Esophagus squamous epithelium (tissue), 5 donors: ENCODE measurements at regions of chr17 and their contacts with region 1.

Region 1: DNA sequence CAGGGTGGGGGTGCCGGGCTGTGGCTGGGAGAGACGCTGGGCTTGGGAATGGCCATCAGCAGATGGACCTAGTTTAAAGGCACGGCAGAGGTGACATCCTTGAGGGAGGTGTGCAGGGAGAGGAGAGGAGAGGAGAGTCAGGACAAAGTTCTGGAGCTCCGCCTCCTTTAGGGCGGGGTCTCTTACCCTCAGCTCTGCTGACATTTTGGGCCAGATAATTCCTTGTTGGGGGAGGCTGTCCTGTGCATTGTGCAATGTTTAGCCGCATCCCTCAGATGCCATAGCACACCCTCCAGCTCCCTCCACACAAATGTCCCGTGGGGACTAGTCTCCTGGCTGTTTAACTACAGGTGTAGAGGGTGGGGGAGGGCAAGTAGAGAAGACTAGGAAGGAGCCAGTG is 48.3 kb downstream of the ARHGAP23 start:
- DNase-seq: no peak
- H3K4me3 ChIP-seq: no peak overlapping the region
- H3K27ac ChIP-seq: peak overlapping the region in 2 of 4 donors; percentile 25 to 34
- H3K4me1 ChIP-seq: peaks cover 0 to 42% (median 3%) of the 10 kb centered on the region in 3 donors
- H3K27me3 ChIP-seq: no peaks in the 10 kb centered on the region
- CTCF ChIP-seq: no peak
- POLR2A ChIP-seq: no peak

Region 2: GRCh38 chr17:38403491-38403890 is 73.1 kb before region 1 on chr17:
- intact Hi-C with region 1: no loop called
- DNase-seq: no peak
- H3K4me3 ChIP-seq: no peak overlapping the region
- H3K27ac ChIP-seq: no peak overlapping the region
- H3K4me1 ChIP-seq: peaks cover 0 to 4% (median 0%) of the 10 kb centered on the region in 3 donors
- H3K27me3 ChIP-seq: no peaks in the 10 kb centered on the region
- CTCF ChIP-seq: no peak
- POLR2A ChIP-seq: no peak

Region 3: GRCh38 chr17:38444151-38444550 is 32.4 kb before region 1 on chr17:
- intact Hi-C with region 1: loop called (anchors 5 kb)
- DNase-seq: no peak
- H3K4me3 ChIP-seq: peak overlapping the region in 1 of 4 donors; percentile 32
- H3K27ac ChIP-seq: peak overlapping the region in 2 of 4 donors; percentile 30 to 50
- H3K4me1 ChIP-seq: peaks cover 25 to 74% (median 44%) of the 10 kb centered on the region in 3 donors
- H3K27me3 ChIP-seq: no peaks in the 10 kb centered on the region
- CTCF ChIP-seq: peak; percentile 68 to 96 (median 92)
- POLR2A ChIP-seq: no peak

Region 4: DNA sequence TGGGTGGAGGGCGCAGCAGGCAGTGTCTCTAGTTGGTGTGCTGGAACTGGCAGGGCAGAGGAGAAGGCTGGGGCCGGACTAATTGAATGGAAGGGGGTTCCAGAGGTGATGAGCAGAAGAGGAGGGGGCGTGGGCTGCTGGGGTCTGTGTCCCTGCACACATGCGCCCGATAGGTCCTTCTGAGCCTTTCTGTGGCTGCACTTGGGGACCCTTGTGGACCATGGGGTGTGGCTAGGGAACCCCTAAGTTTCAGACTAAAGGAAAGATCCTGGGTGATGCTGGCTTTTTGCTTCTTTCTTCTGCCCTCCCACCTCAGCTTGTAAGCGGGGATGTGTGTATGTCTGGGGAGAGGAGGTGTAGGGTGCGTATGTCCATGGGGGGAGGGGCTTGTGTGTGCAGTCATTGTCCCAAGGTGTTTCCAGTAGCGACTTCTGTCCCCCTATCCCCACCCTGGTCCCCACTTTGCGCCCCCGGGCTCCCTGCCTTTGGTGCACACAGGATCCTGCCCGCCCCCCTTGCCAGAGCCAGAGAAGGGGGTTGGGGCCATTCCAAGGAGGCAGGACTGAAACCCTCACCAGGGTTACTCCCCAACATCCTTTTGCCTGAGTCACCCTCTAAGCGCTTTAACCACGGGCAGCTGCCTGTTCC is 34.7 kb after region 1 on chr17:
- intact Hi-C with region 1: no loop called
- DNase-seq: no peak
- H3K4me3 ChIP-seq: no peak overlapping the region
- H3K27ac ChIP-seq: no peak overlapping the region
- H3K4me1 ChIP-seq: peaks cover 3 to 35% (median 22%) of the 10 kb centered on the region in 3 donors
- H3K27me3 ChIP-seq: peaks cover 0 to 26% (median 0%) of the 10 kb centered on the region in 4 donors
- CTCF ChIP-seq: no peak
- POLR2A ChIP-seq: no peak

Region 5: GRCh38 chr17:38579934-38580333 is 103.4 kb after region 1 on chr17:
- intact Hi-C with region 1: no loop called
- DNase-seq: no peak
- H3K4me3 ChIP-seq: no peak overlapping the region
- H3K27ac ChIP-seq: no peak overlapping the region
- H3K4me1 ChIP-seq: peaks cover 12 to 26% (median 13%) of the 10 kb centered on the region in 3 donors
- H3K27me3 ChIP-seq: peaks cover 6 to 90% (median 18%) of the 10 kb centered on the region in 4 donors
- CTCF ChIP-seq: no peak
- POLR2A ChIP-seq: no peak